Naive thymus-derived CD4-positive, alpha-beta T cell (primary cell): ENCODE measurements at regions of chr10 and their contacts with region 1.

Region 1: DNA sequence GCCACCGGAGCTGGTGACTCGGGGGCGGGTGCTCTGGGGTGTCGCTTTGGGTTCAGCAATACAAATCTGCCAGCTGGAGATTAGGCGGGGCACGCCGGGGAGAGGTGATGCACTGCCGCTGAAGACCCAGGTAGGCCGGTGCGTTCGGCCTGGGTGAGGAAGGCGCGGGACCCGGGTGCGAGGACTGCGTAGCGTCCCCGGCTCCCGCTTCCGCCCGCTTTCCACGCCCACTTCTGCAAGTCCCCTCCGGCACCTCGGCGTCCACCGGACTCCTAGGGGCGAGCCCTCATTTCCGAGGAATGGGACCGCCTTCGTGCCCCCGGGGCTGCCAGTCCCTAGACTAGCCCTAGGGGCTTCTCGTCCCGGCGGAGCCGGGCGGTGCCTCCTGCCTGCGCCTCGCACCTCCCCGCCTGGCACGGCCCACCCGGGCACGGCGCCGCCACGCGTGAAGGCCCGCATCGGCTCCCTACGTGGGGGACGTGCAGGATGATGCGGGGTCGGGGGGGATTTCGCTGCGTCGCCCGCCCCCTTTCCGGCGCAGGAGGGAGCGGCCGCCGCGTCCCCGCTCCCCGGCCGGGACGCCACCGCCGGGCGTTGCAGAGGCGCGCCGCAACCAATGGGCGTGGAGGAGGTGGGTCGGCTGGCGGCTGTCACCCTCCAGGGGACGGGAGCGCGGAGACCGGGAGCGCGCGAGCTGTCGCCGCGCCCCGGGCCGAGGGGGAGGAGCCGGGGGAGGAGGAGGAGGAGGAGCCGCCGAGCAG is 40.0 kb downstream of the HK1 start:
- DNase-seq: peak; percentile 88 to 96 (median 91)
- ATAC-seq: peak; percentile 97
- H3K4me3 ChIP-seq: peak overlapping the region; percentile 85
- H3K4me3 Mint-ChIP-seq: peak overlapping the region; percentile 86 to 99 (median 96)
- H3K27ac ChIP-seq: peak overlapping the region; percentile 90
- H3K27ac Mint-ChIP-seq: peak overlapping the region; percentile 51 to 97 (median 86)
- H3K4me1 ChIP-seq: peaks cover 22 to 26% of the 10 kb centered on the region in 2 donors
- H3K4me1 Mint-ChIP-seq: peaks cover 7 to 49% (median 36%) of the 10 kb centered on the region in 7 donors
- H3K27me3 ChIP-seq: no peaks in the 10 kb centered on the region
- H3K27me3 Mint-ChIP-seq: no peaks in the 10 kb centered on the region

Region 2: DNA sequence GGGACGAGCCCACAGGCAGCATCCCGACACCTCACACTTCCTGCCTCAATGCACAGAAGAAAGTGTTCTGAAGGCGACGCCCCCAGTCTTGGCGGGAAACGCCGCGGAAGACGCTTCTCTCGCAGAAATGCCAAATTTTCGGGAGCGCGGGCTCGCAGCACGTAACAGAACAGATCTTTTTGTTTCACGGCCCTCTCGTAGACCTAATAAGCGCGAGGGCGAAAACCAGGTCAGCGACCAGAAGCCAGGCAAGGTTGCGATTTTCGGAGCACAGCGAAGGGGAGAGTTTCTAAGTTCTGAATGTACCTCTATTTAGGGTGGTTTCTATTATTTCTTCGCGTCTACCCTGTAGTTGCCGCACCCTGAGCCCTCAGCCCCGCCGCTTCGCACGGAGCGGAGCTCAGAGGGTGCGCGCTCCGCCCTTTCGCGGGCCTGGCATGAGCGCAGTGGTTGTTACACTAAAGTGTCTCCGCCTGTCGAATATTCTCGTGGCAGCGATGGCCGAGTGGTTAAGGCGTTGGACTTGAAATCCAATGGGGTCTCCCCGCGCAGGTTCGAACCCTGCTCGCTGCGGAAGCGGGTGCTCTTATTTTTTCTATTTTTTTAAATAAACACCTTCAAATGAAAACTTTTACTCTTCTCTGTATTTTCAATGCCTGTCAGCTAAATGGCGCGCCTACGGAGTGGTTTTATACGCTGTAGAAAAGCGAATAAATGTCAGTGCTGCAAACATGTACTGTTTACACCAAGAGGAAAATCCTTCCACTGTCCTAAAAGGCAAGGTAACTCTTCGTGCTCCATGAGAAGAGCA is 1554.1 kb before region 1 on chr10:
- CTCF ChIA-PET with region 1: no interaction called
- POLR2A ChIA-PET with region 1: no interaction called
- intact Hi-C with region 1: loop called in 1 of 2 experiments (anchors 5 kb)
- DNase-seq: peak; percentile 96 to 99 (median 98)
- ATAC-seq: peak; percentile 88
- H3K4me3 ChIP-seq: peak overlapping the region; percentile 99
- H3K4me3 Mint-ChIP-seq: peak overlapping the region; percentile 81 to 99 (median 94)
- H3K27ac ChIP-seq: peak overlapping the region; percentile 81
- H3K27ac Mint-ChIP-seq: peak overlapping the region; percentile 95 to 100 (median 100)
- H3K4me1 ChIP-seq: peaks cover 4 to 6% of the 10 kb centered on the region in 2 donors
- H3K4me1 Mint-ChIP-seq: peaks cover 0 to 37% (median 14%) of the 10 kb centered on the region in 7 donors
- H3K27me3 ChIP-seq: no peaks in the 10 kb centered on the region
- H3K27me3 Mint-ChIP-seq: peaks cover 0 to 16% (median 0%) of the 10 kb centered on the region in 5 donors

Region 3: DNA sequence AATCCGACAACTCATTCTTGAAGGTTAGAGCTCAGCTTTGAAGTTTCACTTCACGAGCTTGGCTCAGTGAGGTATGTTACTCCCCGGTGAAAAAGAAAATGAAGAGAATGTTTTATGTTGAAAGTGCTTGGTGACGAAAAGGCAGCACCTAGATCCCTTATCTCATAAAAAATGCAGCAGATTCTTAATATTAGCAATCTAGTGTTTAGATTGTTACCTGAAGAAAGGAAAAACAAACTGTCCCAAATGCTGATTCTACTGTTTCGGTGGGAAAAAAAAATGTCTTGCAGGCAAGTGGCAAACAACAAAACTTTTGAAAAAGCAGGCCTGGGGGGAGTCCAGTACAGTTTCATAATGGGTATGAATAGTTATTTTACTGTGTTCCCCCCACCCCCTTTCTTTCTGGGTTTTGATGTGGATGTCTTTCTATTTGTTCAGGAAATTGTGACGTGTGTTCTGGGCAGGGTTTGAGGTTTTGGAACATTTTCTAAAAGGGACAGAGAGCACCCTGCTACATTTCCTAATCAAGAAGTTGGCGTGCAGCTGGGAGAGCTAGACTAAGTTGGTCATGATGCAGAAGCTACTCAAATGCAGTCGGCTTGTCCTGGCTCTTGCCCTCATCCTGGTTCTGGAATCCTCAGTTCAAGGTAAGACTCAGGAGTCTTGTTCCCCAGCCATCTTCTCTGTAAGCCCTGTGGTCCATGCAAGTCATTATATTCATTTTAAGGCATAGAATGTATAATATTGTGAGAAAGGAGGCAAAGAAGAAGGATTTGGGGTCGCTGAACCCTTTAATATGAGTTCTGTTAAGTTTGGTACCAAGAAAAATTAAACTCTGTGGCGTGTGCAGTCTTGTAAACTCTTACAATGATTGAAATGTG is 230.5 kb before region 1 on chr10 and contains the start of gene SRGN:
- CTCF ChIA-PET with region 1: no interaction called
- POLR2A ChIA-PET with region 1: no interaction called
- intact Hi-C with region 1: loop called in 1 of 2 experiments (anchors 1 kb)
- DNase-seq: peak; percentile 54 to 94 (median 87)
- ATAC-seq: peak; percentile 76
- H3K4me3 ChIP-seq: peak within 1 kb of the TSS; percentile 84
- H3K4me3 Mint-ChIP-seq: peak within 1 kb of the TSS; percentile 85 to 95 (median 93)
- H3K27ac ChIP-seq: peak within 1 kb of the TSS; percentile 97
- H3K27ac Mint-ChIP-seq: peak within 1 kb of the TSS; percentile 93 to 99 (median 98)
- H3K4me1 ChIP-seq: peaks cover 28 to 46% of the 10 kb centered on the region in 2 donors
- H3K4me1 Mint-ChIP-seq: peaks cover 25 to 66% (median 58%) of the 10 kb centered on the region in 7 donors
- H3K27me3 ChIP-seq: no peaks in the 10 kb centered on the region
- H3K27me3 Mint-ChIP-seq: no peaks in the 10 kb centered on the region
- total RNA-seq, gene SRGN: 66.6 to 748 (median 227) TPM

Region 4: DNA sequence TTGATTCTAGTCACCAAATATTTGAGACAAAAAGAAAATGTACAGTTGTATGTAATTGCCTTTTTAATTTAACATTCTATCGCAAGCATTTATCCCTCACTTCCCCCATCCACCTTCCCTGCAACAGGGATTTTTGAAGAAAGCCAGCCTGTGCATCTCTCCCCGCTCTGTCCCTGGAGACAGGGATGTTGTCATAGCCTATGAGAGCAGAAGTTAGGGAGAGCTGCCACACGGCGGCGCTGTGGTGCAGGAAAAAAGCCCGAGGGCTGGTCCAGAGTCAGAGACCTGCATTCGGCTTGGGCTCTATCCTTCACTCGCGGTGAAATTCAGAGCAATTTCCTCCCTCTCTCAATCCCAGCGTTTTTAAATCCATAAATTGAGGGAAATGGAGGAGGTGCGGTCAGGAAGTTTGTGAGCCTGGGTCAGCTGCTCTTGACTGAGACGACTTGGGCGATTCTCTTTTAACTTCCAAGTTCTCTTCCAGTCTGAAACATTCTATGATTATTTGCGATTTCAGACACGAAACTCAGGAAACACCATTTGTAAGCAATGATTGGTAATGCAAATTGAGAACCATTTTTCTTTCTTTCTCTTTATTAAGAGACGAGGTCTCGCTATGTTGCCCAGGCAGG is 80.6 kb before region 1 on chr10:
- CTCF ChIA-PET with region 1: interaction called, 4 read pairs
- POLR2A ChIA-PET with region 1: interaction called, 3 read pairs
- intact Hi-C with region 1: loop called (anchors 1 kb)
- DNase-seq: peak; percentile 67 to 88 (median 79)
- ATAC-seq: peak; percentile 93
- H3K4me3 ChIP-seq: no peak overlapping the region
- H3K4me3 Mint-ChIP-seq: peak overlapping the region in 4 of 10 donors; percentile 9 to 36 (median 10)
- H3K27ac ChIP-seq: no peak overlapping the region
- H3K27ac Mint-ChIP-seq: peak overlapping the region in 6 of 9 donors; percentile 2 to 78 (median 20)
- H3K4me1 ChIP-seq: peaks cover 4 to 6% of the 10 kb centered on the region in 2 donors
- H3K4me1 Mint-ChIP-seq: peaks cover 8 to 37% (median 23%) of the 10 kb centered on the region in 7 donors
- H3K27me3 ChIP-seq: no peaks in the 10 kb centered on the region
- H3K27me3 Mint-ChIP-seq: no peaks in the 10 kb centered on the region

Region 5: DNA sequence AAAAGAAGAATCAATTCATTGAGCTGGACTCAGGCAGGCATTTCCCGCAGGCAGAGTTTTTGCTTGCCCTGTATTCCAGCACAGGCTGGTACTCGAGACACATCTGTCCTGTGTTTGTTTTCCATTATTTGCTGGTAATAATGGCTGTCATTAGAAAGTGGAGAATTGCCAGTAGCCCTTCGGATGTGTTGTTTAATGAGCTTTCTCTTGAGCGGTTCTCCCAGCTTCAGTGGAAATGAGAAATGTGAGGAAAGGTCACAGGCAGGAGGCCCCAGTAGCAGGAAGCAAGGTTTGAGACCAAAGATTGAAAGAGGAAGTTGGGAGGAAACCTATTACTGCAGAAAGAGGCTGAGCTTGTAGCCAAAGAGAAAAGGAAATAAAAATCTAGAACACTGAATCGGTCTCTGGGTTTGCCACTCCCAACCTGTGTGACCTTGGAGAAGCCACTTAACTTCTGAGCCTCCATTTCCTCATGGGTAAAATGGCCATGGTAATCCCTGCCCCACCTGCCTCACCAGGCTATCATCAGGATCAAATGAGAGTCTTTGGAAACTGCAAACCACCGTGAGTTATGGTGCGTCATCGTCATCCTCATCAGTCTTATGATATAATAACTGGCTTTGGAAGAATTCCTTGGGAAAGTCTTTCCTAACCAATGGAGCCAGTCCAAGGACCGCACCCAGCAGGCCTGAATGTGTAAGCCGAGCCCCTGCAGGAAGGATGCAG is 30.7 kb after region 1 on chr10:
- CTCF ChIA-PET with region 1: interaction called, 4 read pairs
- POLR2A ChIA-PET with region 1: interaction called, 27 read pairs
- intact Hi-C with region 1: loop called (anchors 2 kb)
- DNase-seq: peak in 3 of 9 donors; percentile 21 to 32 (median 32)
- ATAC-seq: peak; percentile 50
- H3K4me3 ChIP-seq: peak overlapping the region; percentile 1
- H3K4me3 Mint-ChIP-seq: peak overlapping the region; percentile 68 to 86 (median 78)
- H3K27ac ChIP-seq: peak overlapping the region; percentile 56
- H3K27ac Mint-ChIP-seq: peak overlapping the region; percentile 55 to 98 (median 92)
- H3K4me1 ChIP-seq: peaks cover 39 to 70% of the 10 kb centered on the region in 2 donors
- H3K4me1 Mint-ChIP-seq: peaks cover 59 to 92% (median 78%) of the 10 kb centered on the region in 7 donors
- H3K27me3 ChIP-seq: no peaks in the 10 kb centered on the region
- H3K27me3 Mint-ChIP-seq: no peaks in the 10 kb centered on the region

Region 6: DNA sequence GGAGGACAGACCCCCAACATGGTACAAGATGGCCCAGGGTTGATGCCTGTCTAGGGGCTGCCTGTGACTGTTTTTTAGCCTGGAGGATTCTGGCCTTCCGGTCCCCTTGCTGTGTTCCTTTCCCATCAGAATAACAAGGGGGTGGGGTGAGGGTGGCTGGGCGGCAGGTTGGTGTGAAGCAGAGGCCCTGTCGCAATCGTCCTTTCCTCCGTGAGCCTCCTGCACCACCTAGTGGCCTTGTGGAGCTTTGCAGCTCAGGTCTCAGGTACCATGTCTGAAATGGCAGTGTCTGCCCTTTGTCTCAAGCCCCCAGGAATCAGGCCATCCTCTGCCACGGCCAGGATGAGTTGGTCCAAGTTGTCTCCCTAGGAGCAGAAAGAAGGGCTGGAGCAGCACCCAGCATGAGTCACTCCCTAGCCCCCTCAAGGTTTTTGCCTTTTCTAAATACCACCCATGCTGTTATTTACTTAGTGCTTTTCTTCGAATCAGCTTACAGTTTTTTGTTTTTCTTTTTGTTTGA is 74.3 kb after region 1 on chr10:
- CTCF ChIA-PET with region 1: interaction called, 5 read pairs
- POLR2A ChIA-PET with region 1: interaction called, 9 read pairs
- intact Hi-C with region 1: loop called (anchors 1 kb)
- DNase-seq: peak; percentile 57 to 85 (median 81)
- ATAC-seq: peak; percentile 99
- H3K4me3 ChIP-seq: no peak overlapping the region
- H3K4me3 Mint-ChIP-seq: no peak overlapping the region
- H3K27ac ChIP-seq: peak overlapping the region; percentile 44
- H3K27ac Mint-ChIP-seq: peak overlapping the region; percentile 56 to 93 (median 84)
- H3K4me1 ChIP-seq: peaks cover 4 to 6% of the 10 kb centered on the region in 2 donors
- H3K4me1 Mint-ChIP-seq: peaks cover 8 to 35% (median 20%) of the 10 kb centered on the region in 7 donors
- H3K27me3 ChIP-seq: no peaks in the 10 kb centered on the region
- H3K27me3 Mint-ChIP-seq: no peaks in the 10 kb centered on the region

Region 7: DNA sequence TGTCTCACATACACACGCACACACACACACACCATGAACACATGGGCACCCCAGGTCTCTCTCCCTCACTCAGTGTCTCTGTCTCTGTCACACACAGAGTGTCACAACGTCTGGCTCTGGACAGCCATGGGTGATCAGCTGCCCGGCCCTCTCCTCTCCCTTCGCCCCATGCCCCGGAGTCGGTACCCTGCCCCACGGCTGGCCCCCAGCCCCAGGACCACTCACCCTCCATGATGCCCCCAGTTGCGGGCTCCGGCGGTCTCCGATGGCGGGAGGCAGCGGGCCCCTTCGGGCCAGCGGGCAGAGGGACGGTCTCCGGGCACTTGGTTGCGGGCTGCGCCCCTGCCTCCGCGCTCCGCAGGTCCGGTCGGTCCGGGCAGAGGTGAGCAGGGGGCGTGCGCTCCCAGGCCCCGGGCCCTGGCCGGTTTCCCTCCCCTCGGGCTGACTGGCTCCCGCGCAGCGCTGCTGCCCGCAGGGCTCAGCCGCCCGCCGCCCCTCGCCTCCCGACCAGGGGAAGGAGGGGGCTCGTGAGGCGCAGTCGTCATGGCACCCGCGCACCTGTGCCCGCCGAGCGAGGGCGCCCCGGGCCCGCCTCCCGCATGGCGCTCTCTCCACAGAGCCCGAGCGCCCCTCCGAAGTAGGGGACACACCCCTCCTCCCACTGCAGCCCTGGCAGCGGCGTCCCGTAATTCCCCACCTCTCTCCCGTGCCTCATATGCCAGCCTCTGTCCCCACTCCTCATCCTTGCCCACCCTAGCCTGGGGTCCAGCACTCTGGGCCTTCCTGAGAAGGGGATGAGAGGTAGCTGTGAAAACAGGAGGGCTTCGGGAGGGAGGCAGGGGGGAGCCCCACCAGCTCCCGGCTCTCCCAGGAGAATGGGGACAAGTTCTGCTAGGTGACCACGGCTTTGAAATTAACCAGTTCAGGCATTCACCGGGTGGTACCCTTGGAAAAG is 965.4 kb after region 1 on chr10 and contains the start of gene NPFFR1:
- CTCF ChIA-PET with region 1: no interaction called
- POLR2A ChIA-PET with region 1: no interaction called
- intact Hi-C with region 1: no loop called
- DNase-seq: no peak
- ATAC-seq: no peak
- H3K4me3 ChIP-seq: no peak within 1 kb of the TSS
- H3K4me3 Mint-ChIP-seq: peak within 1 kb of the TSS in 2 of 10 donors; percentile 12 to 16
- H3K27ac ChIP-seq: no peak within 1 kb of the TSS
- H3K27ac Mint-ChIP-seq: no peak within 1 kb of the TSS
- H3K4me1 ChIP-seq: no peaks in the 10 kb centered on the region
- H3K4me1 Mint-ChIP-seq: peaks cover 0 to 2% (median 0%) of the 10 kb centered on the region in 7 donors
- H3K27me3 ChIP-seq: peaks cover 0 to 17% of the 10 kb centered on the region in 2 donors
- H3K27me3 Mint-ChIP-seq: peaks cover 54 to 71% (median 56%) of the 10 kb centered on the region in 5 donors
- total RNA-seq, gene NPFFR1: 0.05 TPM in 1 of 5 experiments, not detected in the others

Region 8: GRCh38 chr10:70815504-70816219 is 1497.4 kb after region 1 on chr10 and contains the start of gene SGPL1:
- CTCF ChIA-PET with region 1: no interaction called
- POLR2A ChIA-PET with region 1: no interaction called
- intact Hi-C with region 1: loop called in 1 of 2 experiments (anchors 10 kb)
- DNase-seq: peak; percentile 65 to 93 (median 84)
- ATAC-seq: peak; percentile 99
- H3K4me3 ChIP-seq: peak within 1 kb of the TSS; percentile 67
- H3K4me3 Mint-ChIP-seq: peak within 1 kb of the TSS; percentile 83 to 95 (median 91)
- H3K27ac ChIP-seq: peak within 1 kb of the TSS; percentile 73
- H3K27ac Mint-ChIP-seq: peak within 1 kb of the TSS; percentile 72 to 93 (median 88)
- H3K4me1 ChIP-seq: peaks cover 4 to 20% of the 10 kb centered on the region in 2 donors
- H3K4me1 Mint-ChIP-seq: peaks cover 17 to 52% (median 43%) of the 10 kb centered on the region in 7 donors
- H3K27me3 ChIP-seq: no peaks in the 10 kb centered on the region
- H3K27me3 Mint-ChIP-seq: peaks cover 0 to 6% (median 0%) of the 10 kb centered on the region in 5 donors
- total RNA-seq, gene SGPL1: 20.9 to 35.5 (median 30.6) TPM